A673 (cell line): ENCODE measurements at regions of chr19 and their contacts with region 1.

Region 1: GRCh38 chr19:15469513-15470297 is 5.4 kb upstream of the RASAL3 start:
- DNase-seq: peak; percentile 84
- H3K4me3 ChIP-seq: peak overlapping the region; percentile 52
- H3K27ac ChIP-seq: peak overlapping the region; percentile 79
- H3K4me1 ChIP-seq: peaks cover 14% of the 10 kb centered on the region
- H3K27me3 ChIP-seq: no peaks in the 10 kb centered on the region
- CTCF ChIP-seq: no peak

Region 2: GRCh38 chr19:15452111-15453047 is 17.3 kb before region 1 on chr19:
- CTCF ChIA-PET with region 1: no interaction called
- POLR2A ChIA-PET with region 1: no interaction called
- intact Hi-C with region 1: no loop called
- DNase-seq: peak; percentile 77
- H3K4me3 ChIP-seq: no peak overlapping the region
- H3K27ac ChIP-seq: no peak overlapping the region
- H3K4me1 ChIP-seq: peaks cover 24% of the 10 kb centered on the region
- H3K27me3 ChIP-seq: no peaks in the 10 kb centered on the region
- CTCF ChIP-seq: no peak

Region 3: DNA sequence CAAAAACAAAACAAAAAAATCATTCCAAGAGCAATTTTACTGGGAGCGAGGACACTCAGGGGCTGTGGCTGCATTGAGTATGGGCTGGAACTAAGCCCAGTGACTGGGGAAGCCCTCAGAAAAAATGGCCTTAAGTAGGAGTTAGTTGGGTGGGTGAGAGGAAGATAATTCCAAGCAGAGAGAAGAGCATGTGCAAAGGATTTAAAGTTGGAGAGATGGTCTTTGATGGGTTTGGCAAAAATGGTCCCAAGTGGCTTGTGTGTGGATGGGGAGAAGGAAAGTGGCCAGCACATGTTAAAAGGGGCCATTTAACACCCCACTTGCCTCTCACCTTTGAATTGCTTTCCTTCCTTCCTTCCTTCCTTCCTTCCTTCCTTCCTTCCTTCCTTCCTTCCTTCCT is 31.9 kb after region 1 on chr19:
- CTCF ChIA-PET with region 1: no interaction called
- POLR2A ChIA-PET with region 1: interaction called, 3 read pairs
- intact Hi-C with region 1: loop called (anchors 1 kb)
- DNase-seq: peak; percentile 96
- H3K4me3 ChIP-seq: no peak overlapping the region
- H3K27ac ChIP-seq: peak overlapping the region; percentile 90
- H3K4me1 ChIP-seq: peaks cover 53% of the 10 kb centered on the region
- H3K27me3 ChIP-seq: no peaks in the 10 kb centered on the region
- CTCF ChIP-seq: no peak